Activated CD4-positive, alpha-beta memory T cell treated with anti-CD3 and anti-CD28 coated beads for 36 hours (primary cell): ENCODE measurements at regions of chr2 and their contacts with region 1.

Region 1: DNA sequence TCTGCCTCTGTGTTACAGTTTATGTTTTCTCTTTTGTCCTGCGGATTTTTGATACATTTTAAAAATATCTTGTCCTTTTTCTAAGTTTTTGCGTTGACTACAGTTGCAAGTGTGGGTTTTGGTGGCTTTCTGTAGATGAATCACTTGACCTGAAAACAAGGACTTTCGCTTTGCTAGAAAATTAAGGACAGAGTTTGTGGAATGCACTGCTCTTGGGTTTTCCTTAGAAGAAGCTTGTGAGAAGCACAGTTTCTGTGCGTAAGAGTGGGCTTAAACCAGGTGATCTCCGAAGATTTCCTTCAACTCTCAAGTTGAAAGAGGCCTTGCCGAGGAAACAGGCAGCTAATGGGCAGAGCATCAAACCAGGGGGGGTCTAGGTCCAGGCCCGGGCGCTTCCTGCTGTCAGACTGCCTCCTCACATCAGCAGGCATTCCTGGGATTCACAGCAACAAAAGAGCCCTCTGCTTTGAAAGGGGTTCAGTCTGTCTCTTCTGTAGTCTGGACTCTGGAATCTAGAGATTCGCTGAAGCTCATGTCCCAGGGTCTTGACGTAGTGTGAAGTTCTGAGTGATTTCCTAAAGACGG is 17.3 kb downstream of the NCK2 start:
- DNase-seq: no peak
- H3K4me3 Mint-ChIP-seq: peak overlapping the region; percentile 48
- H3K27ac Mint-ChIP-seq: peak overlapping the region; percentile 92
- H3K4me1 Mint-ChIP-seq: peaks cover 95% of the 10 kb centered on the region
- H3K27me3 Mint-ChIP-seq: no peaks in the 10 kb centered on the region

Region 2: GRCh38 chr2:105782123-105782522 is 20.1 kb after region 1 on chr2:
- CTCF ChIA-PET with region 1: no interaction called
- POLR2A ChIA-PET with region 1: interaction called, 3 read pairs
- intact Hi-C with region 1: loop called (anchors 2 kb)
- DNase-seq: peak; percentile 11
- H3K4me3 Mint-ChIP-seq: peak overlapping the region; percentile 47
- H3K27ac Mint-ChIP-seq: peak overlapping the region; percentile 50
- H3K4me1 Mint-ChIP-seq: peaks cover 94% of the 10 kb centered on the region
- H3K27me3 Mint-ChIP-seq: no peaks in the 10 kb centered on the region